AG04450 (cell line): ENCODE measurements at regions of chr2 and their contacts with region 1.

Region 1: GRCh38 chr2:219402665-219403515 is 15.2 kb upstream of the DNPEP start:
- DNase-seq: peak; percentile 78
- H3K4me3 ChIP-seq: no peak overlapping the region
- H3K27ac ChIP-seq: no peak overlapping the region
- H3K27me3 ChIP-seq: no peaks in the 10 kb centered on the region
- CTCF ChIP-seq: peak; percentile 96

Region 2: GRCh38 chr2:219229305-219230058 is 173.4 kb before region 1 on chr2 and contains the starts of genes ANKZF1 and ATG9A:
- CTCF ChIA-PET with region 1: no interaction called
- POLR2A ChIA-PET with region 1: no interaction called
- DNase-seq: peak; percentile 93
- H3K4me3 ChIP-seq: peak within 1 kb of the TSS; percentile 71
- H3K27ac ChIP-seq: peak within 1 kb of the TSS; percentile 82
- H3K27me3 ChIP-seq: no peaks in the 10 kb centered on the region
- CTCF ChIP-seq: no peak
- polyA plus RNA-seq, gene ANKZF1: 20.3 and 22.0 TPM in 2 replicates
- polyA plus RNA-seq, gene ATG9A: 81.0 and 84.3 TPM in 2 replicates

Region 3: GRCh38 chr2:219344751-219345430 is 58.0 kb before region 1 on chr2:
- CTCF ChIA-PET with region 1: no interaction called
- POLR2A ChIA-PET with region 1: no interaction called
- DNase-seq: no peak
- H3K4me3 ChIP-seq: no peak overlapping the region
- H3K27ac ChIP-seq: no peak overlapping the region
- H3K27me3 ChIP-seq: peaks cover 17% of the 10 kb centered on the region
- CTCF ChIP-seq: no peak

Region 4: GRCh38 chr2:219441451-219442255 is 38.8 kb after region 1 on chr2:
- CTCF ChIA-PET with region 1: interaction called, 36 read pairs
- POLR2A ChIA-PET with region 1: no interaction called
- DNase-seq: no peak
- H3K4me3 ChIP-seq: peak overlapping the region; percentile 65
- H3K27ac ChIP-seq: no peak overlapping the region
- H3K27me3 ChIP-seq: no peaks in the 10 kb centered on the region
- CTCF ChIP-seq: no peak

Region 5: DNA sequence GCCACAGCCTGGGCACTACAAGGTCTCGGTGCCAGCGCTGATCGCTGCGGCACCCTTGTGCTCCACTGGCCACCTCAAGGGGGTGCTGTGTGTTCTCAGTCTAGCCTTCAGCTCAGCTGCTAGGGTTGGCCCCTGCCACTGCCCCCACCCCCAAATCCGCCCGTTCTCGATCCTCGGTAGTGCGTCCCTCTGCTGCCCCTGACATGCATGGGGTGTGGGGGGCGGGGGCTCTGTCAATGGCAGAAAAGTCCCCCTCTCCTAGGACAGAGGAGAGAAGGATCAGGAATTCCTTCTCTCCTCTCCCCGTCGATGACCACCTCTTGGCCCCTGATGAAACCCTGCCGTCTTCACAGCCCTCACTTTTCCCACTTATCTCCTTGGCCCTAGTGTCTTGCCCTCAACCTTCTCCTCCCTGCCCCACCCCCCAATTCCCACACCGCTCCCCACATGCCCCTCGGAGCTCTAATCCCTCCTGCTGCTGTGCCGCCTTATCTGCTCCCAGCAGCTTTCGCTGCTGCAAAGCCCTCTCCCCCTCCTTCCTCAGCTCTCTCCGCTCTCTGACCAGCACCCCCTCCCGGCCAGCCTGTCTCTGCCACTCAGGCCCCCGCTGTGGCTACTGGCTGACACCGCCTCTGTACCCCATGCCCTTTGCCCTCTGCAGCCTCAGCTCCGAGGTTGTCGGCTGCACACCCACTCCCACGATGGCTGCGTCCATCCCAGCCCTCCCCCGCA is 107.1 kb after region 1 on chr2:
- CTCF ChIA-PET with region 1: interaction called, 23 read pairs
- POLR2A ChIA-PET with region 1: interaction called, 3 read pairs
- DNase-seq: no peak
- H3K4me3 ChIP-seq: peak overlapping the region; percentile 37
- H3K27ac ChIP-seq: no peak overlapping the region
- H3K27me3 ChIP-seq: peaks cover 46% of the 10 kb centered on the region
- CTCF ChIP-seq: peak; percentile 79

Region 6: DNA sequence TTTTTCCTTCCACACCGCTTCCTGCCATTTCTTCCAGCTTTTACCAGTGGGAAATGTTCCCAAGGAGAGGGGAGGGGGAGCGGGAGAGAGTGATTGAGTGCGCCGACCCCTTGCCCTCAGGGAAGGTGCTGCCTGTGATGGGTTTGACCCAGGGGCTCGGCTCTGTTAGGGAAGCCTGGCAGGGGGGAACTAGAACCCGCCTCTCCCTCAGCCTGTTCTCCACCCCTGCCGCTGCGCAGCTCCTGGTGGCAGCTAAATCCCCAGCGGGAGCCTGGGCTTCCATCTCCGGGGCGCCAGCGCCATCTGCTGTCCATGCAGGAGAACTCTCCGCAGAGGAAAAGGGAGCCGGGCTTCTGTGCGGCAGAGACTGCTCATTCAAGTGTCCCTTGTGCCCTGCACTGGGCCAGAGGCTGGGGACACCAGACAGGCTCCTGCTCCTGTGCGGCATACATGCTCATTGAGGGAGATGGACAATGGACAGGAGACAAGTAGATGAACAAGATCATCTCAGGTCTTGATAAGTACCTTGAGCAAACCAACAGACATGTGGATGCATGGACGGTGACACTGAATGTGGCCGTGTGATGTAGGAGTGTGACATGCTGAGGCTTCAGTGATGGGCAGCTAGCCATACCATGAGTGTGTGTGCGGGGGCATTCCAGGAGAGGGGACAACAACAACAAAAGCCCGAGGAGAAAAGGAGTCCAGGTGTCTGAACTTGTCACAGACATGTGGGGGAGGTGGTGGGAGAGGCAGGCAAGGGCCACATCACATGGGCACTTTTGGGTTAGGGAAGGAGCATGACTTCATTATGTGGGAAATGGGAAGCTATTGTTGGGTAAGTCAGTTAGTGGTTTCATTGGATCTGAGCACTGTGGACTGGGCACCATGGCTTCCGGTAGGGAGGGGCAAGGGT is 127.4 kb after region 1 on chr2:
- CTCF ChIA-PET with region 1: interaction called, 270 read pairs
- POLR2A ChIA-PET with region 1: interaction called, 4 read pairs
- DNase-seq: peak; percentile 59
- H3K4me3 ChIP-seq: peak overlapping the region; percentile 41
- H3K27ac ChIP-seq: no peak overlapping the region
- H3K27me3 ChIP-seq: peaks cover 45% of the 10 kb centered on the region
- CTCF ChIP-seq: peak; percentile 98